Esophagus squamous epithelium (tissue), 5 donors: ENCODE measurements at regions of chr1 and their contacts with region 1.

Region 1: DNA sequence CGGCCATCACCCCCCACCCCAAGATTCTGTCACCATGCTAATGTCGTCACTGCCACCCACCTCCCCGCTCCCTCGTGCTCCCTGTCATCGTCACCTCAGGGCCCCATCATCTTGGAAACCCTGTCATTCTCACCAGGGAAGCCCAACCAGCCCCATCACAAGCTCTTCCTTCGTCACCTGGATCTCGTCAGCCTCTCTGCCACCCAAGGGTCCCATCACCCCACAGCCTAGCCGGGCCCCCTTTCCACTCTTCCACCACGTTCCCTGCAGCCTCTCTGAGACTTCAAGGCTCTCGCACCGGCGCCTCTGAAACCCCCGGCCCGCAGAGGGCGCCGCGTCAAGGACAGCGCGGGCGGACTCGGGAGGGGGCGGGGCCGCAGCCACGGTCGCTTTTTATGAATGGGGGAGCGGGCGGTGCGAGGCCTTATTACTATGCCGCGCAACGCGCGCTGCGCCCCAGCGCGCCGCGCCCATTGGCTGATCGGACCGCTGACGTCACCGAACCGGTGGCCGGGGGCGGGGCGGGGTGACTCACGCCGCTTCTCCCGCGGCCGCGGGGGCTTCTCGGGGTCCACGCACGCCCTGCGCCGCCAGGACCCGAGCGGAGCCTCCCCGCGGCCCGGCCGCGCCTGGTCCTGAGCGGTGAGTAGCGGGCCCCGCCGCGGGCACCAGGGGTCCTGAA is at the start of gene GPR3:
- DNase-seq: peak; percentile 46
- H3K4me3 ChIP-seq: peak within 1 kb of the TSS; percentile 26 to 68 (median 46)
- H3K27ac ChIP-seq: peak within 1 kb of the TSS; percentile 1 to 75 (median 61)
- H3K4me1 ChIP-seq: peaks cover 19 to 52% (median 19%) of the 10 kb centered on the region in 3 donors
- H3K27me3 ChIP-seq: no peaks in the 10 kb centered on the region
- CTCF ChIP-seq: peak; percentile 35 to 68 (median 46)
- POLR2A ChIP-seq: peak in 2 of 4 donors; percentile 7 to 26
- total RNA-seq, gene GPR3: 0.38 TPM in 1 of 4 donors, not detected in the others

Region 2: DNA sequence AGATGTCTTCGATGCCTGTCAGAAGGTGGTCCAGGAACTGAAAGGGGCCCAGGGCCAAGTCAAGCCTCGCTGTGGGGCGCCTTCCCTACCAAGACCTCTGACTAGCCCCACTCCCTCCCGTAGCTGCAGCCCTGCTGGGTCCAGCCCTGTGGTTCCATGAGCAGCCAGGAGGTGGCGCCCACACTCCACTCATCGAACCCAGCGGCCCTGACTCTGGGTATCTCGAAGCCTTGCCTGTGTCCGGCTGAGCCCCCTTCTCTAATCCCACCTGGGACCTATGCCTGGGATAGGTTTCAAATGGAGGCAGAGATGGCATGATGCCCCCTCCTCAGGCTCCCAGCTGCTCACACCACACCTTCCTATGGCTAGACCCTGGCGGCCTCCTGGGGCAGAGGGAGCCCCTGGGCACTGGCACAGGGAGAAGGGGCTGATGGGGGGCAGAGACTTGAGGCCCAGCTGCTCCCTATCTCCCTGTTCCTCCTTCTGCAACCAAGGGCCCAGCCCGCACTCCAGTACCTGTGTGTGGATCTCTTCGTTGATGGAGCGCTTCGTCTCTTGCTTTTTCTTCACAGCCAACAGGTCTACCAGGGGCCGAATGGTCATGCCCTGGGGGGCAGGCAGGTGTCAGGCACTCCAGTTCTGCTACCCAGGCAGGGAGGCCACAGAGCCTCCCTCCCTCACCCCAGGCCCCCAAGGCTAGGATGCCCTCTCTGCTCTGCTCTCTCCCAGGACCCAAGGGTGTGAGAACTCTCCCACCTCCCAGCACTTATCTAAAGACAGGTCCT is 289.3 kb before region 1 on chr1:
- intact Hi-C with region 1: loop called (anchors 5 kb)
- DNase-seq: no peak
- H3K4me3 ChIP-seq: no peak overlapping the region
- H3K27ac ChIP-seq: no peak overlapping the region
- H3K4me1 ChIP-seq: peaks cover 23 to 35% (median 23%) of the 10 kb centered on the region in 3 donors
- H3K27me3 ChIP-seq: no peaks in the 10 kb centered on the region
- CTCF ChIP-seq: peak; percentile 93 to 98 (median 97)
- POLR2A ChIP-seq: no peak

Region 3: GRCh38 chr1:27122652-27123051 is 269.6 kb before region 1 on chr1:
- intact Hi-C with region 1: no loop called
- DNase-seq: no peak
- H3K4me3 ChIP-seq: no peak overlapping the region
- H3K27ac ChIP-seq: peak overlapping the region; percentile 23 to 85 (median 73)
- H3K4me1 ChIP-seq: peaks cover 11 to 82% (median 40%) of the 10 kb centered on the region in 3 donors
- H3K27me3 ChIP-seq: no peaks in the 10 kb centered on the region
- CTCF ChIP-seq: no peak
- POLR2A ChIP-seq: no peak

Region 4: DNA sequence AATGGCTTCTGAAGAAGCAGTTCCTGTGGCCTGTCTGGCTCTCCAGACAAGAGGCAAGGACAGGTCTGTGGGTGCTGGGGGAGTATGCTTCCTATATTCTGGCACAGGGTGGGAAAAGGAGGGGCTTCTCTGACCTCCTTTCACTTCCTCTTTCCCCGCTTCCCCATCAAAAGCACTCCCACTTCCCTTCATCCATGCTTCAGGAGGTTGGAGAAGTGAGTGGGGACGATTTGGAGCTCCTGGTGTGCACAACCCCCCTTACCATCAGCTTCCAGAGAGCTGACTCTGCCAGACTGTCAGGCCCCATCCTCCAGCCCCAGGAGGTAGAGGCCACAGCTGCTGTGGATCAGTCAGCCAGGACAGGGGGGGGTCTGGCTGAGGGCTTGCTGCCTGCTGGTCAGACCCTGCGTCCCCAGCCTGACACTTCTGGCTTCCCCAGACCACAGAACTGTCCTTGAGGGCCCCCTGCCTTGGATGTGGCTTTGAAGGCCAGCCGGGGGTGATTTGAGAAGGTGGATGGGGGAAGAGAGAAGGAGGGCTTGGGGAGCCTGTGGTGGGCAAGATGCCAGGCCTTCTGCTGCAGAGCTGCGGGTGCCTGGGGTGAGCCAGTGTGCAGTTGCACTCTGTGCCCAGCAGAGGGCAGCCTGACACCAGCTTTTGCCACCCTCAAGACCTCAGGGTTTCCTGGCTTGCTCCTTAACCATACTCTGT is 91.7 kb before region 1 on chr1:
- intact Hi-C with region 1: loop called (anchors 5 kb)
- DNase-seq: peak; percentile 19
- H3K4me3 ChIP-seq: no peak overlapping the region
- H3K27ac ChIP-seq: peak overlapping the region; percentile 67 to 94 (median 90)
- H3K4me1 ChIP-seq: peaks cover 23 to 56% (median 35%) of the 10 kb centered on the region in 3 donors
- H3K27me3 ChIP-seq: no peaks in the 10 kb centered on the region
- CTCF ChIP-seq: peak; percentile 99 to 100 (median 99)
- POLR2A ChIP-seq: no peak

Region 5: GRCh38 chr1:27341525-27342252 is 50.5 kb before region 1 on chr1 and contains the start of gene SYTL1:
- intact Hi-C with region 1: no loop called
- DNase-seq: no peak
- H3K4me3 ChIP-seq: peak within 1 kb of the TSS; percentile 53 to 69 (median 63)
- H3K27ac ChIP-seq: peak within 1 kb of the TSS; percentile 87 to 98 (median 92)
- H3K4me1 ChIP-seq: peaks cover 7 to 63% (median 19%) of the 10 kb centered on the region in 3 donors
- H3K27me3 ChIP-seq: no peaks in the 10 kb centered on the region
- CTCF ChIP-seq: no peak
- POLR2A ChIP-seq: peak in 2 of 4 donors; percentile 60 to 68
- total RNA-seq, gene SYTL1: 74.7 to 182 (median 125) TPM

Region 6: GRCh38 chr1:27357281-27358037 is 34.8 kb before region 1 on chr1:
- intact Hi-C with region 1: loop called (anchors 5 kb)
- DNase-seq: peak; percentile 43
- H3K4me3 ChIP-seq: peak overlapping the region in 3 of 4 donors; percentile 11 to 49 (median 29)
- H3K27ac ChIP-seq: peak overlapping the region; percentile 64 to 81 (median 70)
- H3K4me1 ChIP-seq: peaks cover 15 to 54% (median 19%) of the 10 kb centered on the region in 3 donors
- H3K27me3 ChIP-seq: no peaks in the 10 kb centered on the region
- CTCF ChIP-seq: peak; percentile 96 to 98 (median 98)
- POLR2A ChIP-seq: no peak

Region 7: DNA sequence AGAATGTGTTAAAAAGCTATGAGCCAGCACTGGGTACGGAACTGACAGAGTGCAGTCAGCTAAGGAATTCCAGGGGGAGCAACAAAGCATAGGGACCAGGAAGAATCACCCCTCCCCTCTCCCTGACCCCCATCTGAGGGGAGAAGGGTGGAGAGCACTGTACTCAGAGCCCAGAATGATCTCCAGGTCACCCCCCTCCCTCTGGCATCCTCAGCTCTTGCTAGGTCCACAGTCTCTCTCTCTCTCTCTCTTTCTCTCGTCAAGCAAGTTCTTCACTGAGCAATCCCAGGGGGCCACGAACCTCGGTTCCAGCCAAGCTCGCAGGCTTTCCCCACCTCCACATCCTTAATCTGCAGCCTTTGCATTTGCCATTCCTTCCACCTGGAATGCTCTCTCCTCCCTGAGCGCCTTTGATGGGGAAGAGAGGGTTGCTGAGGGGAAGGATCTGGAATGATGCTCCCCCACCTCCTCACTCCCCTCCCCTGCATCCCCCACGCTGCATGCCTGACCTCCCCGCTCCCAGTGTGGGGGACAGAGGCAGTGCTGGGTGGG is 104.4 kb after region 1 on chr1:
- intact Hi-C with region 1: no loop called
- DNase-seq: no peak
- H3K4me3 ChIP-seq: peak overlapping the region in 1 of 4 donors; percentile 37
- H3K27ac ChIP-seq: no peak overlapping the region
- H3K4me1 ChIP-seq: peaks cover 8 to 28% (median 15%) of the 10 kb centered on the region in 3 donors
- H3K27me3 ChIP-seq: no peaks in the 10 kb centered on the region
- CTCF ChIP-seq: no peak
- POLR2A ChIP-seq: no peak

Region 8: DNA sequence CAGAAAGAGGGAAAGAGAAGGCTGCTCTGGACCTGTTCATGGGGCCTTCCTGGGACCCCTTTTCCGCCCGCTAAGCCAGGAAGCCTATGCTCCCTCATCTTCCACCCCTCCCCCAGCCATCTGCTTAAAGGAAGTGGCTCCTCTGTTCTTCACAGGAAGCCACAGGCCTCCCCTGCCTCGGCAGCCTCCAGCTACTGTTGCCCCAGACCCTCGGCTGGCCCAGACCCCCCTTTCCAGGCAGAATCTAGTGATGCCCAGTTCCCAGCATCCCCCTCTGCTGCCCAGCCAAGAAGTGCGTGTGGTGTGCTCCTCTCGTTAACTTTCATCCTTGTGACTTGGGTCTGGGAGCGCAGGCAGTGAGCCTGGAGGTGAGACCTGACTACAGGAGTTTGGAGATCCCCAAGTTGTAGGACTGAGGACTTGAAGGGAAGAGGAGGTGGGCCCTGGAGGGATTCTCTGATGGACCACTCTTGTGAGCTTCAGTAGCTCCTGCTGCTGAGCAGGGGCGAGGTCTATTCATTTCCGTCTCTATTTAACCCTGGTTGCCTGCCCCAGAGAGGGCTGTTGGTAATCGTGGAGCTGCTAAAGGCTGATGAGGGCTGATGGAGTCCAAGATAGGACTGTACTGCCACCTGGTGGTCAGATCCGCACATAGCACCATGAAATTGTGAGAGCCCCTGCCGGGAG is 270.6 kb after region 1 on chr1:
- intact Hi-C with region 1: loop called (anchors 10 kb)
- DNase-seq: no peak
- H3K4me3 ChIP-seq: no peak overlapping the region
- H3K27ac ChIP-seq: peak overlapping the region; percentile 53 to 81 (median 62)
- H3K4me1 ChIP-seq: peaks cover 30 to 56% (median 36%) of the 10 kb centered on the region in 3 donors
- H3K27me3 ChIP-seq: no peaks in the 10 kb centered on the region
- CTCF ChIP-seq: peak; percentile 57 to 99 (median 97)
- POLR2A ChIP-seq: no peak